ENCODE measurements at regions of chr12 and their contacts with region 1.

Region 1: DNA sequence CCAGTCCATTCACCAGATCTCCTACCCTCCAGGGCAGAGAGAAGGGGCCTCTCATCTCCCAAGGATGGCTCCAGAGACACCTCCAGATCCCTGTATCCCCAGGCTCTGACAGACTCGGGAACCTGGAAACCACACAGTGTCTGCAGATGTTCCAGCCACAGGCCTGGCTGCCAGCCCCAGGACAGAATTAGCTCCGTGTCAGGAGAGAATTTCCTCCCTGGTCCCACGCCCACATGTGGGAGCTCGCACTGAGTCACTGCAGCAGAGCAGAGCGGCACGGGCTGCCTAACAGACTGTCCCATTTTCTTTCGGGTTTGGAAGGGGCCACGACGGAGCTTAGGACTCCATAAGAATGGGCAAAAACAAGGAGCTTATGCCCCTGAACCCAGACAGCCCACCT is 33.6 kb downstream of the CMKLR1 start:
- DNase-seq: peak; percentile 90 to 96 (median 92)
- ATAC-seq: peak; percentile 73 to 90 (median 88)
- H3K4me3 ChIP-seq: peak overlapping the region in 7 of 12 donors; percentile 14 to 33 (median 21)
- H3K27ac ChIP-seq: peak overlapping the region; percentile 75 to 95 (median 86)
- H3K4me1 ChIP-seq: peaks cover 19 to 95% (median 72%) of the 10 kb centered on the region in 12 donors
- H3K27me3 ChIP-seq: no peaks in the 10 kb centered on the region
- CTCF ChIP-seq: no peak
- POLR2A ChIP-seq: peak in 1 of 2 donors; percentile 56

Region 2: GRCh38 chr12:108342985-108343384 is 37.5 kb after region 1 on chr12:
- intact Hi-C with region 1: loop called in 1 of 10 experiments (anchors 5 kb)
- DNase-seq: no peak
- ATAC-seq: no peak
- H3K4me3 ChIP-seq: no peak overlapping the region
- H3K27ac ChIP-seq: peak overlapping the region in 2 of 12 donors; percentile 9 to 49
- H3K4me1 ChIP-seq: peaks cover 0 to 23% (median 8%) of the 10 kb centered on the region in 12 donors
- H3K27me3 ChIP-seq: peaks cover 0 to 7% (median 0%) of the 10 kb centered on the region in 9 donors
- CTCF ChIP-seq: no peak
- POLR2A ChIP-seq: no peak

Region 3: GRCh38 chr12:108826101-108826806 is 520.7 kb after region 1 on chr12:
- intact Hi-C with region 1: loop called in 1 of 10 experiments (anchors 10 kb)
- DNase-seq: peak; percentile 75 to 81 (median 80)
- ATAC-seq: peak; percentile 62 to 77 (median 66)
- H3K4me3 ChIP-seq: peak overlapping the region in 9 of 12 donors; percentile 15 to 36 (median 24)
- H3K27ac ChIP-seq: peak overlapping the region; percentile 83 to 94 (median 91)
- H3K4me1 ChIP-seq: peaks cover 40 to 94% (median 84%) of the 10 kb centered on the region in 12 donors
- H3K27me3 ChIP-seq: no peaks in the 10 kb centered on the region
- CTCF ChIP-seq: peak in 3 of 12 donors; percentile 10 to 29 (median 27)
- POLR2A ChIP-seq: peak in 1 of 2 donors; percentile 11

Measured in heart left ventricle (tissue), 16 donors.